ENCODE measurements at regions of chr12 and their contacts with region 1.

Region 1: DNA sequence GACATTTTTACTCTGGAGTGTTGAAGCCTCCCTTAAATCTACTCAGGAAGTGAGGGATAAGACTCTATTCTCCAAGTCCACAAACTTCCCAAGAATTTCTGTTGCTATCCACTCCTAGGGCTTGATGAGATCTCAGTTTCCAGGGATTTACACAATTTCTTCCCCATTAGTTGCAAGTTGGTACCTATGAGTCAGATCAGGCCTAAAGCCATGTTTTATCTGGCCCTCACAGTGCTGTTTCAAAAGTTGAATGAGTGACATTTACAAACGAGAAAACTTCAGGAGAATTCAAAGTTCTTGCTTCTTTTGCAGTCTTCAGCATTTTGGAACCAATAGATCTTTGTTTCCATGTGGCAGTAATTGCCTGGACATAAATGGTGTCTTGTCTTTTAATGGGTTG is 156.4 kb upstream of the SYT10 start:
- DNase-seq: no peak
- ATAC-seq: no peak
- H3K4me3 ChIP-seq: no peak overlapping the region
- H3K4me3 Mint-ChIP-seq: no peak overlapping the region
- H3K27ac ChIP-seq: no peak overlapping the region
- H3K27ac Mint-ChIP-seq: no peak overlapping the region
- H3K4me1 ChIP-seq: no peaks in the 10 kb centered on the region
- H3K4me1 Mint-ChIP-seq: no peaks in the 10 kb centered on the region
- H3K27me3 ChIP-seq: no peaks in the 10 kb centered on the region
- H3K27me3 Mint-ChIP-seq: no peaks in the 10 kb centered on the region
- CTCF ChIP-seq: no peak

Region 2: DNA sequence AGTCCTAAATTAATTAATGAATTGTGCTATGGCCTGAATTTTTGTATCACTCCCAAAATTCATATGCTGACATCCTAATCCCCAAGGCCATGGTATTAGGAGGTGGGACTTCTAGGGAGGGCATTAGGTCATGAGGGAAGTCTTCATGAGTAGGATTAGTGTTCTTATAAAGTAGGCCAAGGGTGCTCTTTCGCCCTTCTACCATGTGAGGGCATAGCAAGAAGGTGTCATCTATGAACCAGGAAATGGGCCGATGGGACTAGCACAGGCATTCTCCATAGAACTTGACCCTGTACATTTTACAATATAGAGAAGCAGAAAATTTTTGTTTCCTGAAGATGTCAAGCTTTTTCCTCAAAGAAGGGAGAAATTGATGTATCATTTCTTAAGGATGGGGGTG is 169.0 kb before region 1 on chr12:
- CTCF ChIA-PET with region 1: no interaction called
- POLR2A ChIA-PET with region 1: no interaction called
- intact Hi-C with region 1: no loop called
- DNase-seq: no peak
- ATAC-seq: no peak
- H3K4me3 ChIP-seq: no peak overlapping the region
- H3K4me3 Mint-ChIP-seq: no peak overlapping the region
- H3K27ac ChIP-seq: no peak overlapping the region
- H3K27ac Mint-ChIP-seq: no peak overlapping the region
- H3K4me1 ChIP-seq: no peaks in the 10 kb centered on the region
- H3K4me1 Mint-ChIP-seq: no peaks in the 10 kb centered on the region
- H3K27me3 ChIP-seq: no peaks in the 10 kb centered on the region
- H3K27me3 Mint-ChIP-seq: no peaks in the 10 kb centered on the region
- CTCF ChIP-seq: no peak

Region 3: GRCh38 chr12:33575346-33575745 is 20.7 kb before region 1 on chr12:
- CTCF ChIA-PET with region 1: no interaction called
- POLR2A ChIA-PET with region 1: no interaction called
- intact Hi-C with region 1: loop called in 1 of 2 experiments (anchors 2 kb)
- DNase-seq: no peak
- ATAC-seq: no peak
- H3K4me3 ChIP-seq: no peak overlapping the region
- H3K4me3 Mint-ChIP-seq: no peak overlapping the region
- H3K27ac ChIP-seq: no peak overlapping the region
- H3K27ac Mint-ChIP-seq: no peak overlapping the region
- H3K4me1 ChIP-seq: no peaks in the 10 kb centered on the region
- H3K4me1 Mint-ChIP-seq: no peaks in the 10 kb centered on the region
- H3K27me3 ChIP-seq: no peaks in the 10 kb centered on the region
- H3K27me3 Mint-ChIP-seq: no peaks in the 10 kb centered on the region
- CTCF ChIP-seq: no peak

Measured in CD8-positive, alpha-beta T cell (primary cell).